ENCODE measurements at regions of chr15 and their contacts with region 1.

Region 1: DNA sequence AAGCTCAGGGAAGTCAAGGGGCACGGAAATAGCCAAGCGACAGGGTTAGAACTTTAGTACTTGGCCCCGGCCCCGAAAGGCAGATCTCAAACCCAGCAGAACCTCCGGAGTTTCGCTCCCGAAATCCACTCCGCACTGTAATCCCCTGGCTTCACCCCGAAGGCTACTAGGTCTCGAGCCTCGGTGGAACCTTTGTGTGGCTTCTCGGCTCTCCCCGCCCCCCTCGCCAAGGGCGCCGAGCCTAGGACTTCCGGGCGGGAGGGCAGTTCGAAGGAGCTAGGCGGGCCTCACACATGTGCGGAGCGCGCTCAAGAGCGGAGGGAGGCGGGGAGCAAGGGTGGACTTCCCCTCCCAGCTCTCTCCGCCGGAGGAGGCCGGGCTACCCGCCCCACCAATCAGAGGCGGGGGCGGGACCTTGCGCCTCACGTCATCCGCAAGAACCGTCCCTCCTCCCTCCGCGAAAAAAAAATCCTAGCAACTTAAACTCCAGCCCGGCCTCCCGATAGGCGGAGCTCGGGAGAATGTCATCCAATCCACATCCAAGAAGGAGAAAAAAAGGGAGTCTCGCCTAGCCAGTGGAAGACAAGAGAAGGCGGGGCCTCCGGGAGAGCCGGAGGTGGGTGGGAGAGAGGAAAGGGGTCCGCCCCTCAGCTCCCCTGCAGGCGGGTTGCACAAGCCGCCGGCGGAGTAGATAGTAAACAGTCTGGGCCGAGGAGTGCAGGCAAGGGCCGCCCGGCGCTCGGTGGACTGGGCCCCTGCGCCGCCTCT is 2.4 kb upstream of the SIN3A start:
- DNase-seq: peak; percentile 98 to 100 (median 99)
- H3K4me3 ChIP-seq: peak overlapping the region; percentile 70 to 86
- H3K4me3 Mint-ChIP-seq: peak overlapping the region; percentile 90 to 99 (median 97)
- H3K27ac ChIP-seq: peak overlapping the region; percentile 98
- H3K27ac Mint-ChIP-seq: peak overlapping the region; percentile 98 to 100 (median 99)
- H3K4me1 ChIP-seq: peaks cover 36% of the 10 kb centered on the region
- H3K4me1 Mint-ChIP-seq: peaks cover 26 to 55% (median 33%) of the 10 kb centered on the region in 4 donors
- H3K27me3 ChIP-seq: no peaks in the 10 kb centered on the region
- H3K27me3 Mint-ChIP-seq: peaks cover 0 to 2% of the 10 kb centered on the region in 2 donors

Region 2: DNA sequence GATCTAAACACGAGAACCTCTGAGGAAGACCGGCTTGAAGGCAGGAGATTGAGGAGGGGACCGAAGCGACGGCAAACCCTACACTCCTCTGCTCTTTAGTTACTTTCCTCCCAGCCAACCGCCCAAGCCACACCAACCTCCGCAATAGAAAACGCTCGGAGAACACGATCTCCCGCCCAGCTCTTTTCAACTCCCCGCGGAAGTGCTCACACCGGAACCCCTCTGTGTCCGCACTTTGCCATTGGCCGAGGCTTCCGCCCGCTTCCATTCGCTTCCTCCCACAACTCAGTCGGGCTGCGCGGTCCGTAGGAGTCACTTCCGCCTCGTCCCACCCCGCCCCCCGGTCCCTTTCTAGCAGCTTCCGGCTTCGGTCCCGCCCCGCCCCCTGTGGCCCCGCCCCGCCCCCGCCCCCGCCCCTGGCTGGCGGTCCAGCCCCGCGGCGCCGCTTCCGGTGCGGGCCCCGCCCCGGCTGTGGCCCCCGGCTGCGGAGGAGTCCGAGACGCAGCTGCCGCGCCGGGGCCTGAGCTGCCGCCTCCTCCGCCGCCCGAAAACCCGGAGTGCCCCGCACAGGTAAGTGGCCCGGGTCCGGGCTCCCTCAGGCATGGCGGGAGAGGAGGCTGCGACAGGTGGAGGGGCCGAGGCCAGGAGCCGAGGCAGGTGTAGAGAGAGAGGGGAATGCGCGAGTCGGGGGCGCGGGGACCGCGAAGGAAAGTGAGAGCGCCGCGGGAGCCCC is 913.0 kb before region 1 on chr15 and contains the start of gene ARID3B:
- CTCF ChIA-PET with region 1: no interaction called
- POLR2A ChIA-PET with region 1: interaction called, 3 read pairs
- intact Hi-C with region 1: loop called (anchors 5 kb)
- DNase-seq: peak; percentile 89 to 96 (median 93)
- H3K4me3 ChIP-seq: peak within 1 kb of the TSS; percentile 64 to 79
- H3K4me3 Mint-ChIP-seq: peak within 1 kb of the TSS; percentile 94 to 100 (median 98)
- H3K27ac ChIP-seq: peak within 1 kb of the TSS; percentile 77
- H3K27ac Mint-ChIP-seq: peak within 1 kb of the TSS; percentile 87 to 99 (median 95)
- H3K4me1 ChIP-seq: peaks cover 39% of the 10 kb centered on the region
- H3K4me1 Mint-ChIP-seq: peaks cover 37 to 62% (median 51%) of the 10 kb centered on the region in 4 donors
- H3K27me3 ChIP-seq: no peaks in the 10 kb centered on the region
- H3K27me3 Mint-ChIP-seq: no peaks in the 10 kb centered on the region
- total RNA-seq, gene ARID3B: 32.9 TPM

Region 3: DNA sequence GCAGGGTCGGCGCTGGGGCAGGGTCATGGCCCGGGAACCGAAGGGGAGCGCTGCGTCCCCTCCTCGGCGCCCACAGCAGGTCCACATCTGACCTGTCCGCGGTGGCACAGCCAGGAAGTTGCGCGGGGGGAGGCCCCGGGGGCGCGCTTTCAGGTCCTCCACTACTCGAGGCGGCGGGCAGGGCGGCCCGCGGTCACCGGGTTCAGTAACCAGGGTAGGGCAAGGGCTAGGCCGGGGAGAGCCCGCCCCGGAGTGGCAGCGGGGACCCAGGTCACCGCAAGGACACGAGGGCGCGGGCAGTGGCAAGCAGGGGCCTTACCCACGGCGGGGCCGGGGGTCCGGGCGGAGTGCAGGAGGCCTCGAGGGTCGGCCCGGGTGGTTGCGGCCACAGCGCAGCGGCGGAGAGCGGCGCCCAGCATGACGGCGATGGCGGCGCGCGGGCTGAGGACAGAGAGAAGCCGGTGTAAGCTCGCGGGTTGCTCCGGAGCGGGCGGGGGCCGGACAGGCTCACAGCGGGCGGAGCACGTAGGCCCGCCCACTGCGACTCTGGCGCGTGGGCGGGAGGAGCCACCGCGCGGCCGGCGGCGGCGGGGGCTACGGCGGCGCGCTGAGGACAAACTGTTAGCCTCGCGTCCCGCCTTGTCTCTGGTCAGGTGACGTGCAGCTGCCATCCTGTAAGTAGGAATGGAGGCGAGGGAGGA is 516.1 kb before region 1 on chr15 and contains the start of gene COX5A:
- CTCF ChIA-PET with region 1: no interaction called
- POLR2A ChIA-PET with region 1: no interaction called
- intact Hi-C with region 1: loop called (anchors 5 kb)
- DNase-seq: peak; percentile 92 to 95 (median 93)
- H3K4me3 ChIP-seq: peak within 1 kb of the TSS; percentile 41 to 96
- H3K4me3 Mint-ChIP-seq: peak within 1 kb of the TSS; percentile 88 to 95 (median 94)
- H3K27ac ChIP-seq: peak within 1 kb of the TSS; percentile 79
- H3K27ac Mint-ChIP-seq: peak within 1 kb of the TSS; percentile 88 to 96 (median 92)
- H3K4me1 ChIP-seq: peaks cover 38% of the 10 kb centered on the region
- H3K4me1 Mint-ChIP-seq: peaks cover 21 to 40% (median 28%) of the 10 kb centered on the region in 4 donors
- H3K27me3 ChIP-seq: no peaks in the 10 kb centered on the region
- H3K27me3 Mint-ChIP-seq: no peaks in the 10 kb centered on the region
- total RNA-seq, gene COX5A: 66.8 to 74.4 TPM

Region 4: GRCh38 chr15:75367913-75368688 is 85.8 kb before region 1 on chr15 and contains the start of gene MAN2C1:
- CTCF ChIA-PET with region 1: interaction called, 62 read pairs
- POLR2A ChIA-PET with region 1: interaction called, 222 read pairs
- intact Hi-C with region 1: loop called (anchors 1 kb)
- DNase-seq: peak; percentile 86 to 92 (median 87)
- H3K4me3 ChIP-seq: peak within 1 kb of the TSS; percentile 86 to 95
- H3K4me3 Mint-ChIP-seq: peak within 1 kb of the TSS; percentile 89 to 95 (median 92)
- H3K27ac ChIP-seq: peak within 1 kb of the TSS; percentile 93
- H3K27ac Mint-ChIP-seq: peak within 1 kb of the TSS; percentile 95 to 97 (median 96)
- H3K4me1 ChIP-seq: peaks cover 25% of the 10 kb centered on the region
- H3K4me1 Mint-ChIP-seq: peaks cover 7 to 37% (median 24%) of the 10 kb centered on the region in 4 donors
- H3K27me3 ChIP-seq: no peaks in the 10 kb centered on the region
- H3K27me3 Mint-ChIP-seq: no peaks in the 10 kb centered on the region
- total RNA-seq, gene MAN2C1: 448 to 449 TPM

Region 5: GRCh38 chr15:75578948-75579920 is 125.3 kb after region 1 on chr15 and contains the start of gene PTPN9:
- CTCF ChIA-PET with region 1: no interaction called
- POLR2A ChIA-PET with region 1: interaction called, 32 read pairs
- intact Hi-C with region 1: loop called (anchors 1 kb)
- DNase-seq: peak; percentile 52 to 73 (median 63)
- H3K4me3 ChIP-seq: peak within 1 kb of the TSS; percentile 61 to 74
- H3K4me3 Mint-ChIP-seq: peak within 1 kb of the TSS; percentile 93 to 97 (median 94)
- H3K27ac ChIP-seq: peak within 1 kb of the TSS; percentile 77
- H3K27ac Mint-ChIP-seq: peak within 1 kb of the TSS; percentile 90 to 95 (median 94)
- H3K4me1 ChIP-seq: peaks cover 22% of the 10 kb centered on the region
- H3K4me1 Mint-ChIP-seq: peaks cover 18 to 26% (median 21%) of the 10 kb centered on the region in 4 donors
- H3K27me3 ChIP-seq: no peaks in the 10 kb centered on the region
- H3K27me3 Mint-ChIP-seq: no peaks in the 10 kb centered on the region
- total RNA-seq, gene PTPN9: 15.9 to 16.6 TPM

Region 6: GRCh38 chr15:75647370-75648155 is 193.7 kb after region 1 on chr15 and contains the start of gene SNX33:
- CTCF ChIA-PET with region 1: interaction called, 3 read pairs
- POLR2A ChIA-PET with region 1: interaction called, 181 read pairs
- intact Hi-C with region 1: no loop called
- DNase-seq: peak; percentile 43 to 82 (median 49)
- H3K4me3 ChIP-seq: peak within 1 kb of the TSS; percentile 64 to 73
- H3K4me3 Mint-ChIP-seq: peak within 1 kb of the TSS; percentile 86 to 91 (median 89)
- H3K27ac ChIP-seq: peak within 1 kb of the TSS; percentile 45
- H3K27ac Mint-ChIP-seq: peak within 1 kb of the TSS; percentile 66 to 91 (median 86)
- H3K4me1 ChIP-seq: peaks cover 32% of the 10 kb centered on the region
- H3K4me1 Mint-ChIP-seq: peaks cover 20 to 53% (median 37%) of the 10 kb centered on the region in 4 donors
- H3K27me3 ChIP-seq: no peaks in the 10 kb centered on the region
- H3K27me3 Mint-ChIP-seq: no peaks in the 10 kb centered on the region
- total RNA-seq, gene SNX33: 3.5 to 3.8 TPM

Measured in CD4-positive, alpha-beta memory T cell (primary cell).